PC-9 (cell line): ENCODE measurements at regions of chr3 and their contacts with region 1.

Region 1: DNA sequence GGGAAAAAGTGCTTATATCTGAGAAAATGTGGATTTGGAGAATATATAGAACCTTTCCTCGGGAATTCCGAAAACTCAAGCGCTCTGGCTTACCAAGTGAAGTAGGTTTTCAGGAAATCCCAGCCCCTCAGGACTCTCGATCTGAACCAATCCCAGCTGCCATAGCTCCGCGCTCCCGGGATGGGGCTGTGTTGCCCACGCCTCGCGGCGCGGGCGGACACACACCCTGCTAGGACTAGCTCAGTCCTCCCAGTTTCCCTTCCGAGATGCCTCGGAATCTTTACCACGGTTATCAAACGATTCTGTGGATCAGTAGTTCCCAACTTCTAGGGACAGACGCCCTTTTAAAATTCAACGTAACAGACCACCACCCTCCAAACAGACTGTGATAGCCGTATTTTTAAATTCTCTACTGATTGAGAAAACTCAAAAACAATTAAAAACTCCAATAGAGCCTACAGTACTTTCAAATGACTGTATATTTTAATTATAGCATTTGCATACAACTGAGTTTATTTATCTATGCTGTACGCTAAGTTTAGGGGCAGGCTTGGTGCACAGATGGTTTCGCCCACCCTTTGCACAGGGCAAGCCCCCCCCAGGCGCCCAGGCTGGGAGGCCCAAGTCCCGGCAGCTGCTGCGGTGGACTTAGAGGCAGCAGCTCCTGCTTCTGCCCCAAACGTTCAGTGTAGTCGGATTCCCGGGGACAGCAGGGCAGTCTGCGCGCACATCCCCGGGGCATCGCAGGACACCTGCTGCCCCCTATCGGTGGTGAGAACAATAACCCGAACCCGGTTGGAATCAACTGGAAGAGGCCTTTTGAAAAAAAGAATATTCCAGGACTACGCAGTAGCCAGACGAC is 52.3 kb downstream of the CCDC54 start:
- DNase-seq: peak; percentile 64 to 86
- H3K4me3 ChIP-seq: peak overlapping the region; percentile 38; the same call in 1 of the 2 replicates
- H3K27ac ChIP-seq: no peak overlapping the region
- H3K4me1 ChIP-seq: peaks cover 9% of the 10 kb centered on the region
- H3K27me3 ChIP-seq: no peaks in the 10 kb centered on the region
- CTCF ChIP-seq: peak; percentile 94

Region 2: GRCh38 chr3:106988301-106988700 is 441.2 kb before region 1 on chr3:
- CTCF ChIA-PET with region 1: no interaction called
- POLR2A ChIA-PET with region 1: no interaction called
- intact Hi-C with region 1: no loop called
- DNase-seq: no peak
- H3K4me3 ChIP-seq: no peak overlapping the region
- H3K27ac ChIP-seq: no peak overlapping the region
- H3K4me1 ChIP-seq: no peaks in the 10 kb centered on the region
- H3K27me3 ChIP-seq: no peaks in the 10 kb centered on the region
- CTCF ChIP-seq: no peak

Region 3: GRCh38 chr3:107271787-107272387 is 157.7 kb before region 1 on chr3:
- CTCF ChIA-PET with region 1: interaction called, 41 read pairs
- POLR2A ChIA-PET with region 1: no interaction called
- intact Hi-C with region 1: loop called (anchors 1 kb)
- DNase-seq: peak in 1 of 2 experiments; percentile 65
- H3K4me3 ChIP-seq: no peak overlapping the region
- H3K27ac ChIP-seq: no peak overlapping the region
- H3K4me1 ChIP-seq: no peaks in the 10 kb centered on the region
- H3K27me3 ChIP-seq: no peaks in the 10 kb centered on the region
- CTCF ChIP-seq: peak; percentile 96

Region 4: GRCh38 chr3:107660306-107660976 is 230.9 kb after region 1 on chr3:
- CTCF ChIA-PET with region 1: no interaction called
- POLR2A ChIA-PET with region 1: no interaction called
- intact Hi-C with region 1: loop called (anchors 10 kb)
- DNase-seq: peak in 1 of 2 experiments; percentile 53
- H3K4me3 ChIP-seq: no peak overlapping the region
- H3K27ac ChIP-seq: no peak overlapping the region
- H3K4me1 ChIP-seq: no peaks in the 10 kb centered on the region
- H3K27me3 ChIP-seq: no peaks in the 10 kb centered on the region
- CTCF ChIP-seq: peak; percentile 92

Region 5: GRCh38 chr3:107740992-107741896 is 311.7 kb after region 1 on chr3:
- CTCF ChIA-PET with region 1: interaction called, 11 read pairs
- POLR2A ChIA-PET with region 1: no interaction called
- intact Hi-C with region 1: no loop called
- DNase-seq: no peak
- H3K4me3 ChIP-seq: no peak overlapping the region
- H3K27ac ChIP-seq: no peak overlapping the region
- H3K4me1 ChIP-seq: no peaks in the 10 kb centered on the region
- H3K27me3 ChIP-seq: no peaks in the 10 kb centered on the region
- CTCF ChIP-seq: peak; percentile 83